Activated naive CD4-positive, alpha-beta T cell treated with anti-CD3 and anti-CD28 coated beads for 36 hours (primary cell): ENCODE measurements at regions of chr20 and their contacts with region 1.

Region 1: GRCh38 chr20:9392892-9393857 is 121.2 kb upstream of the LAMP5 start:
- DNase-seq: peak; percentile 34
- H3K4me3 Mint-ChIP-seq: no peak overlapping the region
- H3K27ac Mint-ChIP-seq: no peak overlapping the region
- H3K4me1 Mint-ChIP-seq: no peaks in the 10 kb centered on the region
- H3K27me3 Mint-ChIP-seq: no peaks in the 10 kb centered on the region

Region 2: DNA sequence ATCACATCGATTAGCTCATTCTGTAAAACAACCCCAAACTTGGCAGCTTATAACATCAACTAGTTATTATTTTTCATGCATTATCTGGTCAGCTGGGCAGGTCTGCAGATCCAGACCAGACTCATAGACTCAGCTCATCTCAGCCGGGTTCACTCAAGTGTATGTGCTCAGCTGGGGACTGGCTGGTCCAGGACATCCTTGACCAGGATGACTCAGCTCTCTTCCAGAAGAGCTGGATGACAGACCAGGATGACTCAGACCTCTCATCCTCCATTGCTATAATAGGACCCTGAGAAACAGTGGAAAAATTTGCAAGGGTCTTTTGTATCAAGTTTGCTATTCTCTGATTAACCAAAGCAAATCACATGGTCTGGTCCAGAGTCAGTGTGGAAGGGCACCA is 636.8 kb before region 1 on chr20:
- CTCF ChIA-PET with region 1: no interaction called
- intact Hi-C with region 1: loop called (anchors 1 kb)
- DNase-seq: no peak
- H3K4me3 Mint-ChIP-seq: no peak overlapping the region
- H3K27ac Mint-ChIP-seq: no peak overlapping the region
- H3K4me1 Mint-ChIP-seq: no peaks in the 10 kb centered on the region
- H3K27me3 Mint-ChIP-seq: peaks cover 1% of the 10 kb centered on the region

Region 3: DNA sequence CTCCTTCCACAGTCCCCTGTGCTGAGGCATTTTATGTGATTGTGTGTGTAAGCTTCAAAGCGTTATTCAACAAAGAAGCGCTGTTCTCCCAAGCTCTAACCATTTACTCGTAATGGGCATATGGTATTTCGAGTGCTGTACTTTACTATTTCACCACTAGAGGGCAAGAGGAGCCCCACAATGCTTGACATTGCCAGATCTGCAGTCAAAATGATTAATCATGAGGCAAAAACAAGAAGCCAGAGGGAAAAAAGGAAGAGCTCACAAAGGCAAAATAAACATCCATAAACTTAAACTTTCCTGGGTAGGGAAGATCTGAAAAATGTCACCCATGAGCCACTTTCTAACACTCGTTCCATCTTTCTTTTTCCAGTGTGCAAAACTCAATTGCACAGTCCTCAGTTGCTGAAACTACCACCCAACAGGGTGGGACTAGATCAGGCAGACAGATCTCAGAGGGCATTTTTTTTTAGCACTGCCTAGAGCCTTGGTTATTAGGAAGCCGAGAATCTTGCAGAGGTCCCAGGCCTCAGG is 539.3 kb before region 1 on chr20:
- CTCF ChIA-PET with region 1: no interaction called
- intact Hi-C with region 1: loop called (anchors 1 kb)
- DNase-seq: peak; percentile 6
- H3K4me3 Mint-ChIP-seq: no peak overlapping the region
- H3K27ac Mint-ChIP-seq: no peak overlapping the region
- H3K4me1 Mint-ChIP-seq: no peaks in the 10 kb centered on the region
- H3K27me3 Mint-ChIP-seq: no peaks in the 10 kb centered on the region

Region 4: GRCh38 chr20:9342651-9343050 is 50.5 kb before region 1 on chr20:
- CTCF ChIA-PET with region 1: no interaction called
- intact Hi-C with region 1: no loop called
- DNase-seq: no peak
- H3K4me3 Mint-ChIP-seq: no peak overlapping the region
- H3K27ac Mint-ChIP-seq: no peak overlapping the region
- H3K4me1 Mint-ChIP-seq: no peaks in the 10 kb centered on the region
- H3K27me3 Mint-ChIP-seq: no peaks in the 10 kb centered on the region

Region 5: DNA sequence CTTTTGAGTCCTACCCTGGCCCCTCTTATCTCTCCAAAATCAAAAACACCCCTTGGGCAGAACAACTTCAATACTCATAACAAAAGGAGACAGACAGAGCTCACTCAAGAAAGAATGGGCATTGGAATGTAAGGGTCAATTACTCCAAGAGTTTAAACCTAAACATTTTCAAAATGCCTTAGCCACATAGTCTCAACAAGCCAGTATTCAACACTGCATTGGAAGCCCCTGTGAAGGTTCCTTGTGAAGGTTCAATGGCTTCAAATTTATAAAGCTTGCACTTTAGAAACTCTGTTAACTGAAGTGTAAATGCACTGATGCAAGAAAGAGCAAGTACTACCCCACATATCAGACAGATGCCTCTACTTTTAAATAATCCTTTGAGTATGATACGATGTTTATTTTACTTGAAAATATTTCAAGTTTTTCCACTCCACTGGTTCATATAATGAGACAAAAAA is 17.9 kb before region 1 on chr20:
- CTCF ChIA-PET with region 1: no interaction called
- intact Hi-C with region 1: no loop called
- DNase-seq: no peak
- H3K4me3 Mint-ChIP-seq: no peak overlapping the region
- H3K27ac Mint-ChIP-seq: no peak overlapping the region
- H3K4me1 Mint-ChIP-seq: no peaks in the 10 kb centered on the region
- H3K27me3 Mint-ChIP-seq: no peaks in the 10 kb centered on the region